ENCODE measurements at regions of chr17 and their contacts with region 1.

Region 1: GRCh38 chr17:39852239-39852638 is 11.9 kb downstream of the IKZF3 start:
- DNase-seq: peak; percentile 59
- H3K4me3 Mint-ChIP-seq: no peak overlapping the region
- H3K27ac Mint-ChIP-seq: no peak overlapping the region
- H3K4me1 Mint-ChIP-seq: peaks cover 10% of the 10 kb centered on the region
- H3K27me3 Mint-ChIP-seq: no peaks in the 10 kb centered on the region
- CTCF ChIP-seq: no peak

Region 2: DNA sequence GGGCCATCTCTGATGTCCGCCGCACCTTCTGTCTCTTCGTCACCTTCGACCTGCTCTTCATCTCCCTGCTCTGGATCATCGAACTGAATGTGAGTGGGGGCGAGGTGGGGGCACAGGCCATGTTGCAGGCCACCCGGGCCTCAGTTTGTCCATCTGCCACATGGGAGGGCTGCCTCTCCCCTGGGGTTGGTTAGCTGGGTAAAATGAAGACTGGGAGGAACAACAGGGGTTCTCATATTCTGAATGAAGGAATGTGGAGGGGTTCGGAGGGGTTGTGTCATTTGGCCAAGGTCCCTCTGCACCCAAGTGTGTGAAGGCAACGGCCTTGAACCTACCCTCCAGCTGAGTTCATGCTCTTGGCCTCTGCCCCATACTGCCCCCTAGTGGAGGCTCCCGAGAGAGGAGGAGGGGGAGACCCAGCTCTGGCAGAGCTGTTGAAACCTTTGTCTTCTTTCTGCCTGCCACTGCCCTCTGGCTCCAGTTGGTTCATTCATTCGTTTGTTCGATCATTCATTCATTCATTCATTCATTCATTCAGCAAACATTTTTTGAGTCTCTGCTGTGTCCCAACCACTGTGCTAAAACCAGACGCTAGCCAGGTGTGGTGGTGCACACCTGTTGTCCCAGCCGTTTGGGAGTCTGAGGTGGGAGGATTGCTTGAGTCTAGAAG is 198.4 kb before region 1 on chr17:
- CTCF ChIA-PET with region 1: interaction called, 42 read pairs
- intact Hi-C with region 1: no loop called
- DNase-seq: peak; percentile 100
- H3K4me3 Mint-ChIP-seq: no peak overlapping the region
- H3K27ac Mint-ChIP-seq: no peak overlapping the region
- H3K4me1 Mint-ChIP-seq: peaks cover 23% of the 10 kb centered on the region
- H3K27me3 Mint-ChIP-seq: no peaks in the 10 kb centered on the region
- CTCF ChIP-seq: no peak

Region 3: DNA sequence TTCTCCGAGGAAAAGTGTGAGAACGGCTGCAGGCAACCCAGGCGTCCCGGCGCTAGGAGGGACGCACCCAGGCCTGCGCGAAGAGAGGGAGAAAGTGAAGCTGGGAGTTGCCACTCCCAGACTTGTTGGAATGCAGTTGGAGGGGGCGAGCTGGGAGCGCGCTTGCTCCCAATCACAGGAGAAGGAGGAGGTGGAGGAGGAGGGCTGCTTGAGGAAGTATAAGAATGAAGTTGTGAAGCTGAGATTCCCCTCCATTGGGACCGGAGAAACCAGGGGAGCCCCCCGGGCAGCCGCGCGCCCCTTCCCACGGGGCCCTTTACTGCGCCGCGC is 152.5 kb before region 1 on chr17 and contains the start of gene ERBB2:
- CTCF ChIA-PET with region 1: interaction called, 274 read pairs
- intact Hi-C with region 1: no loop called
- DNase-seq: peak; percentile 100
- H3K4me3 Mint-ChIP-seq: peak within 1 kb of the TSS; percentile 71
- H3K27ac Mint-ChIP-seq: peak within 1 kb of the TSS; percentile 67
- H3K4me1 Mint-ChIP-seq: peaks cover 68% of the 10 kb centered on the region
- H3K27me3 Mint-ChIP-seq: no peaks in the 10 kb centered on the region
- CTCF ChIP-seq: no peak
- total RNA-seq, gene ERBB2: 4,829 and 4,830 TPM in 2 replicates

Region 4: DNA sequence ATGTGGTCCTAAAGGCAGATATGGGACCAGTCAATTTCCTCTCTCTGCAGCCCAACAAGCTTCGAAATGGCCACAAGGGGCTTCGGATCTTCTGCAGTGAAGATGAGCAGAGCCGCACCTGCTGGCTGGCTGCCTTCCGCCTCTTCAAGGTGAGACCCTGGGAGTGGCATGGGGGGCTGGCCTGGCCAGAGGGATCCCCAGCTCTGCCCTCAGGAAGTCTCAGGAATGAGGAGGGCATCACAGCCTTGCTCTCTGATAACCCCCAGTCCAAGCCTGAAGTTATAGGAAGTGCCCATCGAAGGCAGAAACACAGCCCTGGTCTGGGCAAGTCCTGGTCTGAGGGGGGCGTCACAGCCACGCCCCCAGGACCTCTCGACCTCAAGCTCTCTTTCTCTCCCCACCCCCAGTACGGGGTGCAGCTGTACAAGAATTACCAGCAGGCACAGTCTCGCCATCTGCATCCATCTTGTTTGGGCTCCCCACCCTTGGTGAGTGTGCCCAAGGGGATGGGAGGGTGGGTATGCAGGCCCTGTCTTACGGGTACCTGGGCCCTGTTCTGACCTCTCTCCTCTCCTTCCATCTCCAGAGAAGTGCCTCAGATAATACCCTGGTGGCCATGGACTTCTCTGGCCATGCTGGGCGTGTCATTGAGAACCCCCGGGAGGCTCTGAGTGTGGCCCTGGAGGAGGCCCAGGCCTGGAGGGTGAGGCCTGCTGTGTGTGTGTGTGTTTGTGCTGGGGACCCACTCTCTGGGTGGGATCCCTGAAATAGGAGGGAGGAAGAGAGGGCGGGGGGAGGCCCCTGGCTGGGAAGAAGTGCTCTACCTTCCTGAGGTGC is 107.2 kb before region 1 on chr17:
- CTCF ChIA-PET with region 1: interaction called, 25 read pairs
- intact Hi-C with region 1: no loop called
- DNase-seq: no peak
- H3K4me3 Mint-ChIP-seq: no peak overlapping the region
- H3K27ac Mint-ChIP-seq: no peak overlapping the region
- H3K4me1 Mint-ChIP-seq: peaks cover 32% of the 10 kb centered on the region
- H3K27me3 Mint-ChIP-seq: no peaks in the 10 kb centered on the region
- CTCF ChIP-seq: no peak

Region 5: GRCh38 chr17:39889200-39889599 is 37.0 kb after region 1 on chr17:
- CTCF ChIA-PET with region 1: interaction called, 716 read pairs
- intact Hi-C with region 1: no loop called
- DNase-seq: peak; percentile 82
- H3K4me3 Mint-ChIP-seq: no peak overlapping the region
- H3K27ac Mint-ChIP-seq: no peak overlapping the region
- H3K4me1 Mint-ChIP-seq: peaks cover 26% of the 10 kb centered on the region
- H3K27me3 Mint-ChIP-seq: peaks cover 22% of the 10 kb centered on the region
- CTCF ChIP-seq: no peak

Region 6: GRCh38 chr17:39894681-39895376 is 42.6 kb after region 1 on chr17:
- CTCF ChIA-PET with region 1: interaction called, 716 read pairs
- intact Hi-C with region 1: no loop called
- DNase-seq: peak; percentile 63
- H3K4me3 Mint-ChIP-seq: no peak overlapping the region
- H3K27ac Mint-ChIP-seq: no peak overlapping the region
- H3K4me1 Mint-ChIP-seq: peaks cover 23% of the 10 kb centered on the region
- H3K27me3 Mint-ChIP-seq: peaks cover 15% of the 10 kb centered on the region
- CTCF ChIP-seq: no peak

Region 7: DNA sequence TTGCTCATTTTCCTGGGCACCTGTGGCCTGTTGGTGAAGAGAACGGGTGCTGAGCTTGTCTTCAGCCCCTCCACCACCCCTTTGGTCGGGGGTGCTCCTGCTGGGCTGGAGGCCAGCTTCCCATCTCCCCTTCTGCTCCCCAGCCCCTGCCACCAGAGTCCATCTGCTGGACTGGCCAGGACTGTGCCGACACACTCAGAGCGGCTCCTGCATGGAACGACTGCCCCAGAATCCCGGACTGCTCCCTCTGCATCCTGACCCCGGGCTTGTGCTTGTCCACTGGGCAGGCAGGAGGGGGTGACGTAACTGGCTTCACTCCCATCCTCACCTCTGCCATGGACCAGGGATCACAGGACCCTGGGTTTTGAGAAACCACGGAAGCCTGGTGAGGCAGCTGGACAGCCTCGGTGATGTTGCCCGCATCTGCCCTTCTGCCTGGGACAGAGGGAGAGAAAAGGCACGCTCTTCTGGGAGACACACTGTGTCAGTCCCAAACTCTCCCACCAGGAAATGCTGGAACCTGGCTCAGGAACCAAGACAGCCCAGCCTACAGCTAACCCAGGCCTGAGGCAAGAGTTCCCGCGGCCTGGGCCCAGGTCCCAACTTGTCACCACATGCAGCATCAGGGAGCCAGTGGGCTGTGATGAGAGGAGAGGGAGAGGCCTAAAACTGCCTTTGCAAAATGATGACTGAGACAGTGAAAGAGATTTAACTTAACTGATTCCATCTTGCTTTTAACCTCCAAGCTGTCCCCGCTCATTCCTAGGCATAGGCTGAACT is 94.5 kb after region 1 on chr17:
- CTCF ChIA-PET with region 1: interaction called, 1,809 read pairs
- intact Hi-C with region 1: no loop called
- DNase-seq: peak; percentile 86
- H3K4me3 Mint-ChIP-seq: no peak overlapping the region
- H3K27ac Mint-ChIP-seq: no peak overlapping the region
- H3K4me1 Mint-ChIP-seq: peaks cover 39% of the 10 kb centered on the region
- H3K27me3 Mint-ChIP-seq: peaks cover 57% of the 10 kb centered on the region
- CTCF ChIP-seq: no peak

Region 8: GRCh38 chr17:39996800-39997199 is 144.6 kb after region 1 on chr17:
- CTCF ChIA-PET with region 1: no interaction called
- intact Hi-C with region 1: no loop called
- DNase-seq: no peak
- H3K4me3 Mint-ChIP-seq: no peak overlapping the region
- H3K27ac Mint-ChIP-seq: no peak overlapping the region
- H3K4me1 Mint-ChIP-seq: no peaks in the 10 kb centered on the region
- H3K27me3 Mint-ChIP-seq: no peaks in the 10 kb centered on the region
- CTCF ChIP-seq: no peak

Region 9: DNA sequence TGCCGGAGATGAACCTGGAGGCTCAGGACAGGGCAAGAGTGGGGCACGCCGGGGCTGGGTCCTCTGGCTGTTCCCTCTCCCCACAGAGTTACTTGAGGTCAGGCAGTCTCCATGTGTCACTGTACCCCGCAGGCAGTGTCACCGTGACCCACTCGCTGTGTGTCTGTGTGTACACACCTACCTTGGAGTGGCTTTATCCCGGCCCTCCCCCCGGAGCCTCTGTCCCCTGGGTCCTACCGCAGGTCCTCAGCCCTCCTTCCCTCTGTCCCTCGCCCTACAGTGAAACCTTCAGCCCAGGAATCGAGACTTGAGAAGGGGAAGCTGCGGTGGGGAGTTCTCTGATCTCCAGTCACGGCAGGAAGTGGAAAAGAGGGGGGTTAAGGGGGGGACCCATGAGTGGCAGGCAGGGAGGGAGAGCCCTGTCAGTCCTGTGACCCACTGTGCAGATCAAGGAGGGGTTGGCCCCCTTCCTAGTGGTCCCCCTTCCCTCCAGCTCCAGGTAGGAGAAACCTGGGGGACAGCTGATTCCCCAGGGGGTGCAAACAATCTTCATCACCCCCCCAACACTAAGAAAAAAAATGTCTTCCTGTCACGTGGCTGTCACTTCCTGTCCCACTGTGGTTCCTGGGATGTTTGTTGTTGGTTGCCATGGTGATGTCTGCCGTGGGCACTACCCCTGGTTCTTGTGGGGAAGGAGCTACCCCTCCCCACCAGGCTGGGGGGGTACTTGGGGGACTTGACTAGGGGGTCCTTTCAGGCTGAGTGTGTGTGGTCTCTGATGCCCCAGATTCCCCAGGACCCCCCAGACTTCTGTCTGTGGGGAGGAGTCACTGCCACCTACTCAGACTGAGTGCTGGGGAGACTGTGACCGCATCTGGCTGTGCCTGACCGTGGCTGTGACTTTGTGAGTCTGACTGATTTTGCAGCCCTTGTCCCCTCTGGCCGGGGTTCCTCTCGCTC is 470.4 kb after region 1 on chr17:
- CTCF ChIA-PET with region 1: no interaction called
- intact Hi-C with region 1: no loop called
- DNase-seq: peak; percentile 93
- H3K4me3 Mint-ChIP-seq: peak overlapping the region; percentile 33
- H3K27ac Mint-ChIP-seq: peak overlapping the region; percentile 86
- H3K4me1 Mint-ChIP-seq: peaks cover 90% of the 10 kb centered on the region
- H3K27me3 Mint-ChIP-seq: no peaks in the 10 kb centered on the region
- CTCF ChIP-seq: no peak